Endothelial cell of umbilical vein (primary cell): ENCODE measurements at regions of chr12 and their contacts with region 1.

Region 1: DNA sequence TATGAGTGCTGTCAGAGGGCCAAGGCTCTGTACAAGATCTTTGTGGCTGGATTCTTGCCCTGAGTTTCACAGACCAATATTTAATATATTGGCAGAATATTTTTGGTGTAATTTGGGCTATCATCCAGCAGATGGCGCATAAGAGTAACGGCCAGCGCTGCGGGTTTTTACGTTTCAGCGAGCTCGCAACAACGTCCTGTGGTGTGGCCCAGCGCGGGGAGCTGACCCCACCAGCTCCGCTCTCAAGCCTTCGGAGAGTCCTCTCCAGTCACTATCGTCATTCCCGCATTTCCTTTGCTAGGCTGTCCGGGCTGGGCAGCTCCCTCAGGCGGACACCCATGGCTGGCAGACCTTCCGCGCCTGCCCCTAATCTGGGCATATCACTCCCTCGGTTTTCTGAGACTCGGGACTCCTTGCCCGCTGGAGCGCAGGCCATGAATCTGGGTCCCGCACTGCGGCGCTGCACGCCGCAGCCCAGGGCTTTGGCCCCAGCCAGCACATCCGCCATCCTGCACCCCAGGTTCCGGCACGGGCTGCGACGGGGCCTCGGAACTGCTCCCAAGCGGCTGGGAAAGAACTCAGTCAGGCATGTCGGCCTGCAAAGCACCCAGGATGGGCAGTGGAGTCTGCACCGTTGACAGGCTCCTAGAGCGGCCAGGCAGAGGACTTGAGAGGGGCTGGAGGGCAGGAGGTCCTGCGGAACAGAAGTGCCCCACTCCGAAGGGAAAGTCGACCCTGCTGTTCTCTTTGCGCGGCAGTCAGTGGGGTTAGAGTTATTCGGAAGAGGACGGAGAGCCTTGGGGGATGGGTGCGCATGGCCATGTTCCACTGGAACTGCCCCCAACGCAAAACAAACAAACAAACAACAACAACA is 18.4 kb downstream of the OLR1 start:
- DNase-seq: peak; percentile 81
- H3K4me3 ChIP-seq: peak overlapping the region; percentile 44 to 67 (median 48)
- H3K27ac ChIP-seq: peak overlapping the region; percentile 58
- H3K4me1 ChIP-seq: peaks cover 5% of the 10 kb centered on the region
- H3K27me3 ChIP-seq: peaks cover 0 to 2% of the 10 kb centered on the region in 2 experiments
- CTCF ChIP-seq: peak; percentile 70 to 72
- POLR2A ChIP-seq: no peak

Region 2: GRCh38 chr12:10170292-10170691 is 16.8 kb after region 1 on chr12:
- CTCF ChIA-PET with region 1: interaction called, 12 read pairs
- POLR2A ChIA-PET with region 1: no interaction called
- dilution Hi-C with region 1: no loop called
- intact Hi-C with region 1: no loop called
- DNase-seq: no peak
- H3K4me3 ChIP-seq: no peak overlapping the region
- H3K27ac ChIP-seq: no peak overlapping the region
- H3K4me1 ChIP-seq: no peaks in the 10 kb centered on the region
- H3K27me3 ChIP-seq: peaks cover 3 to 4% of the 10 kb centered on the region in 2 experiments
- CTCF ChIP-seq: no peak
- POLR2A ChIP-seq: no peak

Region 3: DNA sequence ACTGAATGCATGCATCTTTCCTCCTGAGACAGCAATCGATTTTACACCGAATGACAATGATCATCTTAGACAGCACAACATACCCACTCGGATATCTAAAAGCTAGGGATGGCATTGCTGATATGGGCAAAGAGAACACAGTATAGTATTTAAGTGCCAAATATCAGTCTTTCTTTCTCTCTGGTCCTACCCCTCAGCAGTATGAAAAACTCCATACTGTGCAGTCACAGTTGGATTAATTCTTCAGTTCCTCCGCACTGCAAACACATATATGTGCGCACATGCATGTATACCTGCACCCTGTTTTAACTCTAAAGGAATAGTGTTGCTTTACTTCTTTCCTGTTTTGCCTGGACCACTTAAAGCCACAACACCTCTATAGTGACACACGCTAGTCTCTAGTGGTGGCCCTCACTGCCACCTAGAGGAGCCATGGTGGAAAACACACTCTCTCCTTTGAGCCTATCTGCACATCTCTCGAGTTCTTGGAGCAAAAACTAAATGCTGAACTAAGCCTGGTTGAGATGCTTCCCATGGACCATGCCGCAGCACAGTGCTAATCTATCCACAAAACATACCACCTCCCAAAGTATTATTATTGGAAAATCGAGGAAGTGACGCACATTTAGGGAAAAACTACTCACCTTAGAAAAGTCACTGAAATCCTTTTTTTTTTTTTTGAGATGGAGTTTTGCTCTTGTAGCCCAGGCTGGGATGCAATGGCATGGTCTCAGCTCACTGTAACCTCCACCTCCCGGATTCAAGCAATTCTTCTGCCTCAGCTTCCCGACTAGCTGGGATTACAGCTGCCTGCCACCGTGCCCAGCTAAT is 37.3 kb after region 1 on chr12:
- CTCF ChIA-PET with region 1: interaction called, 49 read pairs
- POLR2A ChIA-PET with region 1: no interaction called
- dilution Hi-C with region 1: no loop called
- intact Hi-C with region 1: loop called (anchors 1 kb)
- DNase-seq: peak; percentile 74
- H3K4me3 ChIP-seq: no peak overlapping the region
- H3K27ac ChIP-seq: no peak overlapping the region
- H3K4me1 ChIP-seq: no peaks in the 10 kb centered on the region
- H3K27me3 ChIP-seq: peaks cover 3% of the 10 kb centered on the region in 2 experiments
- CTCF ChIP-seq: peak; percentile 68 to 77
- POLR2A ChIP-seq: no peak

Region 4: DNA sequence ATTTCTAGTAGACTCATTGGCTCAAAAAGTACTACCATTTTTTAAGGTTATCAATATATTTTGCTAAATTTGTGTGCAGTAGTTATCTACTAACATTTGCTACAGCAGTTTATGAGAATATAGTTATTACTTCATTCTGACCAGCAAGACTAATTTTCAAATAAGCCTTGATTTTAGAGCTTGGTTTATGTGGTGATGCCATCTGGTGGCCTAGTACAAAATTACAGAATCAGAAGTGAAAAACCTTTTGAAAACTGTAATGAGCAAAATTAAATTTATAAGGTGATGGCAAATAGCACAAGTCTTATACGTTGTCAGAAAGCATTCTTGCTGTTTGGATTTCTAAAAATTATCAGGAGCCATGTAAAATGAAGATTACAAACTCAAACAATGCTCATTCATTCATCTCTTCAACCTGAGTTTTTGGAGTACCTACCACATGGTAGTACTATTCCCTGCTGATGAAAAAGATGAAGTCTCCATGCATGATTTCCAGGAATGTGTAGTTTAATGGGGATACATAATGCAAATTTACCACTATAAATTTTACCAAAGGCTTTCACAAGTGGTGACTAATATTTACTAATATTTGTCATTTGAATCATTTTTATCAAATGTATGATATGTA is 408.9 kb after region 1 on chr12:
- CTCF ChIA-PET with region 1: interaction called, 16 read pairs
- POLR2A ChIA-PET with region 1: no interaction called
- dilution Hi-C with region 1: no loop called
- intact Hi-C with region 1: loop called (anchors 1 kb)
- DNase-seq: peak; percentile 72
- H3K4me3 ChIP-seq: no peak overlapping the region
- H3K27ac ChIP-seq: no peak overlapping the region
- H3K4me1 ChIP-seq: no peaks in the 10 kb centered on the region
- H3K27me3 ChIP-seq: no peaks in the 10 kb centered on the region
- CTCF ChIP-seq: peak; percentile 34 to 41
- POLR2A ChIP-seq: no peak